A673 (cell line): ENCODE measurements at regions of chr3 and their contacts with region 1.

Region 1: GRCh38 chr3:146747928-146748327 is 142.8 kb upstream of the PLSCR5 start:
- DNase-seq: peak; percentile 82
- H3K4me3 ChIP-seq: no peak overlapping the region
- H3K27ac ChIP-seq: no peak overlapping the region
- H3K4me1 ChIP-seq: peaks cover 37% of the 10 kb centered on the region
- H3K27me3 ChIP-seq: no peaks in the 10 kb centered on the region
- CTCF ChIP-seq: peak; percentile 76

Region 2: DNA sequence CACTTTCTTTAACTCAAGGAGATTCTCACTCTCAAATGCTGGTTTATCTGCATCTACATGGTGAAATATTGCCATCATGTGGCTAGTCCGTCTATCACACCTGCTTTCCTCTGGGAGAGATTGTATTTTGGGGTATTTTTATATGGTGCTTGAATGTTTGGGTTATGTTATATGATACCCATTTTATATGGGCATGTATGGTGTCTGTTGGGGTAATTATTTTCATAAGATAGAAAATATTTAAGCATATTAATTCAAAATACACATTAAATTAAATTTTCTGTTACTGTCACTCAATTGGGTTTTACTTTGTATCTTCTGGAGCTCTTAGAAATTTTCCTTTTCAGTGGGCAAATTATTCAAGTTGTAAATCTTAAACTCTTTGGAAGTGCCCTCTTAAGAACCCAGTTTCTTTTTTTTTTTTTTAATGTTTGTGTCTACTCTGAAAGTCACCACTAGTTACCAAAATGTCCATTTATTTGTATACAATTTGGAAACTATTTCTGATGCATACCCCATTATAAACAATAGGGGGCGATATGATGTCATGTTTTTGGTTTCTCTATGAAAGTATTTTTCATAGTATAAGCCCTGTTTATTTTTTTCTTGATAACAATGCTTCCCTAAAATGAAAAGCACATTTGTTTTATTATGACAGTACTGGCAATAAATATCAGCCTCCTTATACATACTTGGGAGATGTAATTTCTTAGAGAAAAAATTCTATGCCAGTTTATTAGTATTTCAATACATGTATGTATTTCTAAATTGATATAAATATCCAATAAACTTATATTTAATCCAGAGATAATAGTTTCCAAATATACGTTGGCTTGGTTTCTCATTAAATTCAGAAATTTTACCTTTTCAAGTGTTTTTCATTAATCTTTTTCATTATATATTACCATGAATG is 106.7 kb before region 1 on chr3:
- CTCF ChIA-PET with region 1: no interaction called
- POLR2A ChIA-PET with region 1: no interaction called
- intact Hi-C with region 1: loop called (anchors 5 kb)
- DNase-seq: peak; percentile 78
- H3K4me3 ChIP-seq: no peak overlapping the region
- H3K27ac ChIP-seq: no peak overlapping the region
- H3K4me1 ChIP-seq: no peaks in the 10 kb centered on the region
- H3K27me3 ChIP-seq: no peaks in the 10 kb centered on the region
- CTCF ChIP-seq: peak; percentile 66

Region 3: GRCh38 chr3:146817704-146818103 is 69.8 kb after region 1 on chr3:
- CTCF ChIA-PET with region 1: no interaction called
- POLR2A ChIA-PET with region 1: no interaction called
- intact Hi-C with region 1: loop called (anchors 5 kb)
- DNase-seq: peak; percentile 86
- H3K4me3 ChIP-seq: no peak overlapping the region
- H3K27ac ChIP-seq: no peak overlapping the region
- H3K4me1 ChIP-seq: peaks cover 22% of the 10 kb centered on the region
- H3K27me3 ChIP-seq: no peaks in the 10 kb centered on the region
- CTCF ChIP-seq: peak; percentile 68

Region 4: GRCh38 chr3:147113293-147114044 is 365.5 kb after region 1 on chr3:
- CTCF ChIA-PET with region 1: no interaction called
- POLR2A ChIA-PET with region 1: no interaction called
- intact Hi-C with region 1: no loop called
- DNase-seq: peak; percentile 60
- H3K4me3 ChIP-seq: no peak overlapping the region
- H3K27ac ChIP-seq: no peak overlapping the region
- H3K4me1 ChIP-seq: no peaks in the 10 kb centered on the region
- H3K27me3 ChIP-seq: no peaks in the 10 kb centered on the region
- CTCF ChIP-seq: no peak

Region 5: GRCh38 chr3:147191795-147192385 is 444.0 kb after region 1 on chr3:
- CTCF ChIA-PET with region 1: interaction called, 3 read pairs
- POLR2A ChIA-PET with region 1: no interaction called
- intact Hi-C with region 1: loop called (anchors 2 kb)
- DNase-seq: peak; percentile 82
- H3K4me3 ChIP-seq: no peak overlapping the region
- H3K27ac ChIP-seq: no peak overlapping the region
- H3K4me1 ChIP-seq: peaks cover 15% of the 10 kb centered on the region
- H3K27me3 ChIP-seq: no peaks in the 10 kb centered on the region
- CTCF ChIP-seq: peak; percentile 89

Region 6: GRCh38 chr3:147616998-147617619 is 869.2 kb after region 1 on chr3:
- CTCF ChIA-PET with region 1: no interaction called
- POLR2A ChIA-PET with region 1: no interaction called
- intact Hi-C with region 1: loop called (anchors 10 kb)
- DNase-seq: peak; percentile 62
- H3K4me3 ChIP-seq: no peak overlapping the region
- H3K27ac ChIP-seq: no peak overlapping the region
- H3K4me1 ChIP-seq: peaks cover 22% of the 10 kb centered on the region
- H3K27me3 ChIP-seq: no peaks in the 10 kb centered on the region
- CTCF ChIP-seq: peak; percentile 77